ENCODE measurements at regions of chr13 and their contacts with region 1.

Region 1: DNA sequence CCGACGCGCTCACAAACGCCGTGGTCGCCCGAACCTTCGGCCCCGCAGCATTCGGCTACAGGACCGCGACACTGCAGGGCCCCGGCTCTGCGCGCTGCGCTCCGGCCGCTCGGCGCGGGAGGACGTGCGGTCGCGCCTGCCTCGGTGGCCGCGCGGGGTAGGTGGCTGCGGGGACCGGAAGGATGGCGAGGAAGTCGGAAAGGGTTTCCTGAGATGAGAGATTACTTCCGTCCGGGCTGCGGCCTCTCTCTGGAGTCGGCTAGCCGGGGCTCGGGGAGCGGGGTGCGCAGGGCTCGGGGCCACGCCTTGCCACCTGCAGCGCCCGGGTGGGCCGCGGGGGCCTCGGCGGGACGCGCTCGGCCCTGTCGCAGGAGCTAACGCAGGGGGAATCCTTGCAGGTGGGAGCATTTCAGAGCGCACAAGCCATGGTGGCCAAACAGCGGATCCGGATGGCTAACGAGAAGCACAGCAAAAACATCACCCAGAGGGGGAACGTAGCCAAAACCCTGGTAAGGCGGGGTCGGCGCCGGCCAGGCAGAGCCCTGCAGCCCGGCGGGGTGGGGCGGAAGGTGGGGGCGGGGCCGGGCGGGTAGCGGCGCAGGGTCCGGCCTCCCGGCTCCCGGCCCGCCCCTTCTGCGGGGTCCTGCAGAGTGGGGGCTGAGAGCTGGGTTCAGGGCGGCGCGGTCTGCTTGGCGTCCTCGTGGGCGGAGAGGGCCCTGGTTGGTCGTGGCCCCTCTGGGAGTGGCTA is at the start of gene SERP2:
- DNase-seq: no peak
- ATAC-seq: no peak; the same call in 2 of the 3 replicates
- H3K4me3 ChIP-seq: no peak within 1 kb of the TSS
- H3K27ac ChIP-seq: no peak within 1 kb of the TSS
- H3K4me1 ChIP-seq: peaks cover 16% of the 10 kb centered on the region
- H3K27me3 ChIP-seq: peaks cover 0 to 9% of the 10 kb centered on the region in 2 experiments; a peak in 2 of 5 replicates
- CTCF ChIP-seq: no peak
- EP300 ChIP-seq: no peak
- POLR2A ChIP-seq: no peak
- RAD21 ChIP-seq: no peak
- total RNA-seq, gene SERP2: not detected in 2 replicates

Region 2: DNA sequence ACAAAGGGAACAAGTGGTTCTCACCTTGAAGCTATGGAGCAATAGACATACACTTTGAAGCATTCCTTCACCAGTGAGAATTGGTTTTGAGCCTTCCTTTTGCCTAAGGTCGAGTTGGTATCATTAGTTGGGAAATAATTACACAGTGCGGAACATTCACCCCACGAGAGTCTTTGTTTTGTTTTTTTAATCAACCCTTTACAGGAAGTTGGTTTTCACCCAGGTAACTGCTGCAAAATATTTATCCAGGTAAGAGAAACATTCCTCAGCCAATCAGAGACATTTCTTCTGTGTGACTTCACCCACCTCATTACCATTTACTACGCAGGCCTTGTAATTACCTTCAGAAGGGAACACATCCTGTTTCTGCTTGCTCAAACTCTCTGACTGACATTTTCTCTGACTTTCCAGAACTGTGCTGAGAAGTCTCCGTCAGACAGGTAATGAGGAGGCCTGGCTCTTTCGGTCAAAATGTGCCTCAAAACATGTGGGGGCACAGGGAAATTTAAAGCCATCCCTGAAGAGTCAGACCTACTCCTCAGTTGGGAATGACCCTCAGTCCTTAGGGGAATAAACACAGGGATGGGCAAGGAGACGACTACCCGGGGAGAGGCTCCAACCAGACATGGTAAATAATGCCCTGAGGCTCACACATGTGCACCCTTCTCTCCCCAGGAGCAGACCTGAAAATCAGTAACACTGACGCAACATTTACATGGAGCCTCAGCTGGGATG is 22.8 kb before region 1 on chr13:
- CTCF ChIA-PET with region 1: no interaction called
- POLR2A ChIA-PET with region 1: no interaction called
- in situ Hi-C with region 1: no loop called
- intact Hi-C with region 1: loop called (anchors 1 kb)
- DNase-seq: no peak
- ATAC-seq: no peak
- H3K4me3 ChIP-seq: no peak overlapping the region
- H3K27ac ChIP-seq: no peak overlapping the region
- H3K4me1 ChIP-seq: peaks cover 6% of the 10 kb centered on the region; the same call in 1 of the 2 replicates
- H3K27me3 ChIP-seq: no peaks in the 10 kb centered on the region
- CTCF ChIP-seq: no peak
- EP300 ChIP-seq: no peak
- POLR2A ChIP-seq: no peak
- RAD21 ChIP-seq: no peak

Region 3: GRCh38 chr13:44746690-44747089 is 372.9 kb after region 1 on chr13:
- CTCF ChIA-PET with region 1: no interaction called
- POLR2A ChIA-PET with region 1: no interaction called
- in situ Hi-C with region 1: no loop called
- intact Hi-C with region 1: no loop called
- DNase-seq: no peak
- ATAC-seq: no peak
- H3K4me3 ChIP-seq: no peak overlapping the region
- H3K27ac ChIP-seq: no peak overlapping the region
- H3K4me1 ChIP-seq: no peaks in the 10 kb centered on the region
- H3K27me3 ChIP-seq: no peaks in the 10 kb centered on the region
- CTCF ChIP-seq: no peak
- EP300 ChIP-seq: no peak
- POLR2A ChIP-seq: no peak
- RAD21 ChIP-seq: no peak

Measured in HepG2 (cell line).